ENCODE measurements at regions of chr12 and their contacts with region 1.

Region 1: DNA sequence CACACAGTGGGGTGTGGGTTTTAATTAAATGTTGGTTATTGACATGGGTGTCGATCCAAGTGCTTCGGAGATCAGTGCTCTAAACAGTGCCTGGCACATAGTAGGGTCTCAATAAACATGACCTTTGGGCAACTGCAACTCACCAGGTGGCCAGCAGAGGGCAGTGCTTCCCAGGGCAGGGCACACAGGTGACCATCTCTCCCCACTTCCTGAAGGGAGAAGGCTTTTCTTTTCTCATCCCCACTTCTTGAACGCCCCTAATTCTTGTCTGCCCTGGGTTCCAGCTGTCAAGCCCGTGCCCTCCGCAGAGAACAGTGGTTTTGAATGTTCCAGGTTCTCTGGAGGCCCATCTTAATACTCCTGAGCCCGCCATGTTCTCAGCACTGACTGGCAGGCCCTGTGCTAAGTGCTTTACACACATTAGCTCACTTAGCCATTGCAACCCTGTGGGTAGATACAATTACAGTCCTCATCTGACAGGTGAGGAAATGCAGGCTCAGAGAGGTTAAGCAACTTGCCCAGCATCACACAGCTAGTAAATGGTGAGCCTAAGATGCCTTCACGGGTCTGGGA is 16.3 kb downstream of the RAPGEF3 start:
- DNase-seq: peak; percentile 26
- ATAC-seq: peak; percentile 53
- H3K4me3 ChIP-seq: no peak overlapping the region
- H3K27ac ChIP-seq: no peak overlapping the region
- H3K4me1 ChIP-seq: peaks cover 24 to 37% of the 10 kb centered on the region in 2 experiments
- H3K27me3 ChIP-seq: no peaks in the 10 kb centered on the region
- CTCF ChIP-seq: peak; percentile 90 to 98 (median 96)
- POLR2A ChIP-seq: no peak
- RAD21 ChIP-seq: peak; percentile 91

Region 2: GRCh38 chr12:47517122-47517521 is 225.2 kb before region 1 on chr12:
- CTCF ChIA-PET with region 1: no interaction called
- POLR2A ChIA-PET with region 1: no interaction called
- RAD21 ChIA-PET with region 1: no interaction called
- intact Hi-C with region 1: no loop called
- DNase-seq: no peak
- ATAC-seq: no peak
- H3K4me3 ChIP-seq: no peak overlapping the region
- H3K27ac ChIP-seq: no peak overlapping the region
- H3K4me1 ChIP-seq: no peaks in the 10 kb centered on the region
- H3K27me3 ChIP-seq: no peaks in the 10 kb centered on the region
- CTCF ChIP-seq: no peak
- POLR2A ChIP-seq: no peak
- RAD21 ChIP-seq: no peak

Region 3: GRCh38 chr12:47731723-47732122 is 10.6 kb before region 1 on chr12:
- CTCF ChIA-PET with region 1: interaction called, 21 read pairs
- POLR2A ChIA-PET with region 1: no interaction called
- RAD21 ChIA-PET with region 1: no interaction called
- intact Hi-C with region 1: no loop called
- DNase-seq: no peak
- ATAC-seq: no peak
- H3K4me3 ChIP-seq: no peak overlapping the region
- H3K27ac ChIP-seq: no peak overlapping the region
- H3K4me1 ChIP-seq: peaks cover under 1 to 16% of the 10 kb centered on the region in 2 experiments; a peak in 2 of 4 replicates
- H3K27me3 ChIP-seq: no peaks in the 10 kb centered on the region
- CTCF ChIP-seq: no peak
- POLR2A ChIP-seq: no peak
- RAD21 ChIP-seq: no peak

Region 4: DNA sequence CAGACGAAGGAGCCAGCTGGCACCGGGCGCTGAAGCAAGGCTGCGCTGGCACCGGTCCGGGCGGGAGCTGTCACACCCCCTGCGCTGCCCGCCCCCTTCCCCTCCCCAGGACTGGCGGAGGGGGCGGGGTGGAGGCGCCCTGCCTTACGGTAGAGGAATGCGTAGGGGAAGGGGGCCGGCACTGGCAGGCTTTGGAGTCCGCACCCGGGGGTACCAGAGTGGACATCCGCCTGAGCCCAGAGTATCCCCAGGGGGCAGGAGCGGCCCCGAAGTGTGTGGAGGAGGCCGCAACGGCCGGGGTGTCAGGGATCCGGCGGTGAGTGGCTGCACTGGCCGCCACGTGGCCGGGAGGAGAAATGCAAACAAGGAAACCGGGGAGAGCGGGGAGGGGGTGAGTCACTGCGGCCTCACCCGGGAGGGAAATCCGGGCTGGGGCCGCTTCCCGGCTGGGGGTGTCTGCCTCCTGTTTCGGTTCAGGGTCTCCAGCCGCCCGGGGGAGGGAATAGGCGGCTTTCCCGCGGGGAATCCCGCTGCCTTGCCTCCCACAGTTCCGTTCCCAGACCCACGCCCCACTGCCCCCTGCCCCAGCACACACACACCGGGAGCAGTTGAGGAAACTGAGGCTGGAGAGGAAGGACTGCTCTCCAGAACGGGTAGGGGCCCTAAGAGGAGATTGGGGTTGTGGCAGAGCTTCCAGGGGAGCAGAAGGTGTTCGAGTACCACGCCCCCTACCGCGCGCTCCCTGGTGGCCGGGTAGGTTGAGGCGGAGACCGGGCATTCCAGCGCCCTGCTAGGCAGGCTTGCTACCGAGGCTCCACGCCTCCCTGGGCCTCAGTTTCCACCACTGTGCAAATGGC is 16.7 kb after region 1 on chr12 and contains the start of gene RAPGEF3:
- CTCF ChIA-PET with region 1: interaction called, 75 read pairs
- POLR2A ChIA-PET with region 1: interaction called, 5 read pairs
- RAD21 ChIA-PET with region 1: interaction called, 3 read pairs
- intact Hi-C with region 1: no loop called
- DNase-seq: no peak
- ATAC-seq: peak; percentile 89
- H3K4me3 ChIP-seq: peak within 1 kb of the TSS; percentile 65 to 73
- H3K27ac ChIP-seq: peak within 1 kb of the TSS; percentile 62
- H3K4me1 ChIP-seq: peaks cover 26 to 36% of the 10 kb centered on the region in 2 experiments
- H3K27me3 ChIP-seq: no peaks in the 10 kb centered on the region
- CTCF ChIP-seq: peak; percentile 59 to 79 (median 72)
- POLR2A ChIP-seq: no peak
- RAD21 ChIP-seq: no peak; the same call in 1 of the 2 replicates
- total RNA-seq, gene RAPGEF3: 1.8 TPM

Region 5: DNA sequence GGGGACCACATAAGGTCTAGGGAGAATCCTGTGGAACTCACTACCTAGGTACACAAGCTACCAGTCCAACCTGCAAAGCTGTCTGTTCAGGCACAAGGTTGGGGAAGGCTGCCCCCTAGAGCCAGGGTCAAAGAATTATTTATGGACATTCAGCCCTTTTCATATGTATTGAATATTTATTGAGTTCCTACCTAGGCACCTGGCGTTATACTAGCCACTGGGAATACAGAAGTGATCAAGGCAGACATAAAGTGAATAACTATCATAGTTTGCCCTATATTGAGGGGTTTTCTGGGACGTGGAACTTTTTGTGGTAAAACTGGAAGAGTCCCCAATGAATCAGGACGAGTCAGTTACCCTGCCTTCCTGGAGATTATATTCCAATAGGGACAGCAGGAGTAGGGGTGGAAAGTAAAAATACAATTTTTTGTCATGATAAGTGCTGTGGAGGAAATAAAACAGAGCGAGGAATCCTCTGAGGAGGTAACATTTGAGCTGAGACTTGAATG is 24.9 kb after region 1 on chr12:
- CTCF ChIA-PET with region 1: interaction called, 197 read pairs
- POLR2A ChIA-PET with region 1: interaction called, 7 read pairs
- RAD21 ChIA-PET with region 1: interaction called, 29 to 61 read pairs
- intact Hi-C with region 1: loop called (anchors 1 kb)
- DNase-seq: peak; percentile 52
- ATAC-seq: peak; percentile 83
- H3K4me3 ChIP-seq: no peak overlapping the region
- H3K27ac ChIP-seq: no peak overlapping the region
- H3K4me1 ChIP-seq: peaks cover 12 to 24% of the 10 kb centered on the region in 2 experiments
- H3K27me3 ChIP-seq: no peaks in the 10 kb centered on the region
- CTCF ChIP-seq: peak; percentile 71 to 90 (median 71)
- POLR2A ChIP-seq: no peak
- RAD21 ChIP-seq: peak; percentile 90

Region 6: DNA sequence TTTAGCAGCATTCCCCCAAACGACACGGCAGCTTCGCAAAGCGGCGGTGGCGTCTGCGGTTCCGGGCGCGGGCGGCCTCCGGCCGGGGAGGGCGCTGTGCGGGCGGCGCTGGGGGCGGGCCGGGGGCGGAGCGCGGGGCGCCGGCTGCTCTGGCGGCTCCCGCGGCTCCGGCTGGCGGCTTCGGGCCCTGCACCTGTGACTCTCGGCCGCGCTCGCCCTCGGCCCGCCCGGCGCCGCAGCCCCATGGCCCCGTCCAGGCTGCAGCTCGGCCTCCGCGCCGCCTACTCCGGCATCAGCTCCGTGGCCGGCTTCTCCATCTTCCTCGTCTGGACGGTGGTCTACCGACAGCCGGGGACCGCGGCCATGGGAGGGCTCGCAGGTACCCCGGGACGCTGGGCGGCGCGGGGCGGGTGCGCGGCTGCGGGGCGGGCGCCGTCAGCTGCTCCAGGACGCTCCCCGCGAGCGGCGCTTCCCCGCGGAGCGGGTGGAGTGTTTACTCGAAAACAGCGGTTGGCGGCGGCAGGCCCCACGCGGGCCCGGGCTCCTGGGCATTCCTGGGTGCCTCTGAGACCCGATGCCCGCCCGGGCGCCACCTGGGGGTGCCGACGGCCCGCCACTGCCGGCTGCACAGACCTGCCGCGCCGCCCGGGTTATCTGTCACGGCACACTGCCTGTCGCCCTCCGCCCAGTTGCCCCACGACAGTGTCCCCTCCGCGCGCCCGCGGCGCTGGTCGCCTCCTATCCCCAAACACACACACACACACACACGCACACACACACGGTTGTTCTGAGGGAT is 30.9 kb after region 1 on chr12 and contains the start of gene SLC48A1:
- CTCF ChIA-PET with region 1: interaction called, 197 read pairs
- POLR2A ChIA-PET with region 1: interaction called, 5 read pairs
- RAD21 ChIA-PET with region 1: interaction called, 29 to 61 read pairs
- intact Hi-C with region 1: no loop called
- DNase-seq: no peak
- ATAC-seq: peak; percentile 90
- H3K4me3 ChIP-seq: peak within 1 kb of the TSS; percentile 71 to 91
- H3K27ac ChIP-seq: peak within 1 kb of the TSS; percentile 58; the same call in 1 of the 2 replicates
- H3K4me1 ChIP-seq: peaks cover 29 to 62% of the 10 kb centered on the region in 2 experiments
- H3K27me3 ChIP-seq: no peaks in the 10 kb centered on the region
- CTCF ChIP-seq: peak in 2 of 3 experiments; percentile 22 to 40; a peak in 4 of 6 replicates
- POLR2A ChIP-seq: peak; percentile 46
- RAD21 ChIP-seq: no peak; the same call in 1 of the 2 replicates
- total RNA-seq, gene SLC48A1: 20.0 TPM

Region 7: DNA sequence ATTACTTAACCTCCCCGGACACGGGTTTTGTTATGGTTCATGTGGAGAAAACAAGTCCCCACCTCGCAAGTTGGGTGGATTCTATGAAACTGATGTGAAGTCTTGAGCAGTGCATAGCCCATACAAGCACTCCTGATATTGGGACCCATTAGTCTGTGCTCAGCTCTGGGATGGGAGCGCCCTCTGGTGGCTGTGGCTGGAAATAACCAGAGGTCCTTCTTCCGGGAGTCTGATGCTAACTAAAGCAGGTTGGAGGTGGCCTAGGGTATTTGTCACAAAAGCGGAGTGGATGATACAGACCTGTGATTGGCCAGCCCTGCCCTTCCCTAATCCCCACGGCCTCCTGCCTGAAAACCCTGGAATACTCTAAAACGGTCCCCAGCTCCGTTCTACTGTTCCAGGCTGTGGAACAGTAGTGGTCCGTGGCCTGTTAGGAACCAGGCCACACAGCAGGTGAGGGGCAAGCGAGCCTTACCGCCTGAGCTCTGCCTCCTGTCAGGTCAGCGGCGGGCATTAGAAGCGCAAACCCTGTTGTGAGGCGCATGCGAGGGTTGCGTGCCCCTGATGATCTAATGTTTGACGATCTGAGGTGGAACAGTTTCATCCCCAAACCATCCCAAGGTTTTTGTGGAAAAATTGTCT is 37.1 kb after region 1 on chr12:
- CTCF ChIA-PET with region 1: interaction called, 70 read pairs
- POLR2A ChIA-PET with region 1: no interaction called
- RAD21 ChIA-PET with region 1: interaction called, 3 to 6 read pairs
- intact Hi-C with region 1: loop called (anchors 1 kb)
- DNase-seq: peak; percentile 61
- ATAC-seq: peak; percentile 89
- H3K4me3 ChIP-seq: no peak overlapping the region
- H3K27ac ChIP-seq: no peak overlapping the region
- H3K4me1 ChIP-seq: peaks cover 17 to 39% of the 10 kb centered on the region in 2 experiments
- H3K27me3 ChIP-seq: no peaks in the 10 kb centered on the region
- CTCF ChIP-seq: peak; percentile 91 to 97 (median 94)
- POLR2A ChIP-seq: no peak
- RAD21 ChIP-seq: peak; percentile 94